Common myeloid progenitor, CD34-positive (primary cell): ENCODE measurements at regions of chr19 and their contacts with region 1.

Region 1: DNA sequence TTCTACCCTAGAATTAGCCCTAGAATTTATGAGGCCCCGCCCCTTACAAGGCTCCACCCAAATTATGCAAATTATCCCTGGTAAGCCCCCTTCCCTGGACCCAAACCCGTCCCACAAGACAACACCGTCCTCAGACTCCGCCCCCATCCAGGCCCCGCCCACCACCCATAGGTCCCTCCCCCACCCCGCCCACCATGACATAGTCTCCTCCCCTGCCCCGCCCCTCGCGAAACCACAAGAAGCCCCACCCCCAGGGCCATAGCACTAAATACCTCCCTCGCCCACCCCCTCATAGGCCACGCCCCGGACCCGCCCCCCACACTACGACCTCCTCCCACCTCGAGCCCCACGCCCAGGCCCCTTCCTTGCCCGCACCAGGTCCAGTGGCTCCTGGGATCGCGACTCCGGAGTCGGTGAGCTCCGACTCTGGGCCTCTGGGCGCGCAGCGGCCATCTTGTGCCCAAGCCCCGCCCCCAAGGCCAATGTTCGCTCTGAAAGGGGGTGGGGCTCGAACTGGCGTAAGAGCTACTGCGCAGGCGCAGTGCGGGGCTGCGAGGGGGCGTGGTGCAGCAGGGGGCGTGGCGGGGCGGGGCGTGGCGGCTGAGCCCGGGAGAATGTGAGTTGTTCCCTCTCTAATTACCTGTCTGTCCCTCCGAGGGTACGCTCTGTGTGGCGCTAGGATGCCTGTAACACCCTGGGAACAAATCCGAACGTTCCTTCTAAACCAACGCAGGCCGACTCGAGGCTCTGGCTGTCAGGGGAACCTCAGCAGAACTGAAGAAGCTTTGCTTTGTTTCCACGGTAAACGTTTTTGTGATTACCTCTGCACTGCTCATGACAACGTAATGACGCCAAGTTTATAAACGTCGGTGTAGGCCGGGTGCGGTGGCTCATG is at the start of gene ZNF784:
- DNase-seq: peak; percentile 91 to 94 (median 93)
- H3K4me3 ChIP-seq: peak within 1 kb of the TSS; percentile 46 to 88 (median 72)
- H3K27ac ChIP-seq: peak within 1 kb of the TSS; percentile 77 to 92
- H3K4me1 ChIP-seq: peaks cover 2 to 29% (median 21%) of the 10 kb centered on the region in 4 experiments
- H3K27me3 ChIP-seq: no peaks in the 10 kb centered on the region

Region 2: DNA sequence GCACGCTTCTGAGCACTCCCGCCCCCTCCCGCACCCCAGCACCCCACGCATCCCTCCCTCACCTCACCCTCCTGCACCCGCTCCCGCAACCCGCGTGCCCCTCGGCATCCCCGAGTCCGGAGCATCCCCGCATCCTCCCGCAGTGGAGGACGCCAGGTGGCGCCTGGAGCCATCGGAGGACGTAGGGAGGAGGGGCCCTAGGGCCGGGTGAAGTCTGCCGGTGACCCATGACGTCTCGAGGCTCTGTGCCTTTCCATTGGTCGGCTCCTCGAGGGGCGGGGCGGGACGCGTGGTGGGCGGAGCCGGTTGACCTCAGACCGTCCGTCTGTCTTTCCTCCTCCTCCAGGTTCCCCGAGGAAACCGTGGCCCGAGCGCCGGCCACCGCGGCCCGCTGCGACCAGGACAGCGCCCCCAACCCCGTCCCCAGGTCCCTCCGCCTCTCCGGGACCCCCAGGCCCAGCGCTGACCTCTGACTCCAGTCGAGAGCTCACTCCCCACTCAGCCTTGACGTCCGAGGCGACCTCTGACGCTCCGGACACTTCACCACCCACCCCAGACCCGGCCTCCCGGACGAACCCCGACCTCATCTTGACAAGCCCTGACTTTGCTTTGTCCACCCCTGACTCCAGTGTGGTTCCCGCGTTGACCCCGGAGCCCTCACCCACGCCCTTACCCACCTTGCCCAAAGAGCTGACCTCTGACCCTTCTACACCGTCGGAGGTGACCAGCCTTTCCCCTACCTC is 107.3 kb before region 1 on chr19:
- CTCF ChIA-PET with region 1: interaction called, 13 read pairs
- POLR2A ChIA-PET with region 1: no interaction called
- DNase-seq: peak; percentile 90 to 93 (median 90)
- H3K4me3 ChIP-seq: peak overlapping the region in 6 of 7 experiments; percentile 27 to 79 (median 64)
- H3K27ac ChIP-seq: peak overlapping the region; percentile 6 to 79
- H3K4me1 ChIP-seq: peaks cover 0 to 7% (median 4%) of the 10 kb centered on the region in 4 experiments
- H3K27me3 ChIP-seq: no peaks in the 10 kb centered on the region

Region 3: DNA sequence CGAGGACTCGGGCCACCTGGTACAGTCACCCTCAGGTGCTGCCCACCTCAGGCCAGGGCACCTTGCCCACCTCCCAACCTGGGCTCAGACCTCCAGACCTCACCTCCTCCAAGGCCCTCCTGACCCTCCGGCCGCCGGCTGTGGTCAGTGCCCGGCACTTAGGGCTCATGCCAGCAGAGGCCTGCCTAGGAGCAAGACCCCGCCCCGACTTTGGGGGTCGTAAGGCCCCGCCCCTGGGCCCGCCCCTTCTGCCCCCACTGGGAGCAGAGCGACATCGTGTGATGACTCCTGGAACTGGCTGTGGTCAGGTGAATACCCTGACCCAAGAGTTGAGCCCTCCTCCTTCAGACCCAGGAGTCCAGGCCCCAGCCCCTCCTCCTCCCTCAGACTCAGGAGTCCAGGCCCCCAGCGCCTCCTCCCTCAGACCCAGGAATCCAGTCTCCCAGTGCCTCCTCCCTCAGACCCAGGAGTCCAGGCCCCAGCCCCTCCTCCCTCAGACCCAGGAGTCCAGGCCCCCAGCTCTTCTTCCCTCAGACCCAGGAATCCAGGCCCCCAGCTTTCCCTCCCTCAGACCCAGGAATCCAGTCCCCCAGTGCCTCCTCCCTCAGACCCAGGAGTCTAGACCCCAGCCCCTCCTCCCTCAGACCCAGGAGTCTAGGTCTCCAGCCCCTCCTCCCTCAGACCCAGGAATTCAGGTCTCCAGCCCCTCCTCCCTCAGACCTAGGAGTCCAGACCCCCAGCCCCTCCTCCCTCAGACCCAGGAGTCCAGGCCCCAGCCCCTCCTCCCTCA is 87.2 kb before region 1 on chr19 and contains the start of gene SBK2:
- CTCF ChIA-PET with region 1: no interaction called
- POLR2A ChIA-PET with region 1: no interaction called
- DNase-seq: peak; percentile 20 to 47 (median 46)
- H3K4me3 ChIP-seq: no peak within 1 kb of the TSS
- H3K27ac ChIP-seq: no peak within 1 kb of the TSS
- H3K4me1 ChIP-seq: no peaks in the 10 kb centered on the region
- H3K27me3 ChIP-seq: no peaks in the 10 kb centered on the region

Region 4: GRCh38 chr19:55611300-55611982 is 12.9 kb before region 1 on chr19:
- CTCF ChIA-PET with region 1: interaction called, 32 read pairs
- POLR2A ChIA-PET with region 1: interaction called, 3 read pairs
- DNase-seq: no peak
- H3K4me3 ChIP-seq: no peak overlapping the region
- H3K27ac ChIP-seq: no peak overlapping the region
- H3K4me1 ChIP-seq: peaks cover 0 to 8% (median 5%) of the 10 kb centered on the region in 4 experiments
- H3K27me3 ChIP-seq: no peaks in the 10 kb centered on the region